GM12878 (cell line): ENCODE measurements at regions of chr3 and their contacts with region 1.

Region 1: DNA sequence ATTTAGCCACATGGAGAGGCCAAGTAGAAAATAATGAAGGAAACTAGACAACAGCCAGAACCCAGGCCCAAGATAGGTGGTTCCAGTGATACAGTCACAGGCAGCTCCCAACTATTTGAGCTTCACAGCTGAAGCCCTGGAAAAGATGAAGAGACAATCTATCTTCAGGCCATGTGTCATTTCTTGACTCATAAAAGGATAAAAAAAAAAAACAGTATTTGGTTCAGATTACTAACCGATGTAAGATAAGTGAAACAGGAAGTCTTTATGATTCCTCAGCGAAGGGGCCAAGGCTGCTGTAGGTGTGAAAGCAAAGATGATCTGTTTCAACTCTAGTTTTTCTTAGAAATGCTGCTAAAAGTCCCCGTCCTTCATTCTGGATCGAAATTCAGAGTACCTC is 394.6 kb downstream of the ZNF385D start:
- DNase-seq: no peak
- ATAC-seq: peak; percentile 74
- H3K4me3 ChIP-seq: no peak overlapping the region
- H3K27ac ChIP-seq: no peak overlapping the region
- H3K4me1 ChIP-seq: no peaks in the 10 kb centered on the region
- H3K27me3 ChIP-seq: no peaks in the 10 kb centered on the region
- CTCF ChIP-seq: no peak
- EP300 ChIP-seq: no peak
- POLR2A ChIP-seq: no peak
- RAD21 ChIP-seq: no peak

Region 2: DNA sequence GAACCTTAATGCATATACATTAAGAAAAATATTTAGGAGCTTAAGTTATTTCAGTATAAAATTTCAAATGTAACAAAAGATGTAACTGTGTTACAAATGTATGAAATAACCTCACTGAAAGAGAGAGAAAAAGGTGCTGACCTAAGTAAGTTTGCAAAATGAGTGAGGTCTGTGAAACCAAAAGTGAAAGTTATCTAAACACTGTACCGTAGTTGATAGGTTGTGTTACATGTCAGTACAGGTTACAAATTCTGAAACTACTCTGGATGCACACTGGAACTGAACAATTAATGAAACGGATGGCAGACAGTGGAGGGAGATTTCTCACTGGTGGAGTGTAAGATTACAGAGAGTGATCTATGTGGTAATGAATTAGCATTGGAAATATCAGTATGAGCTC is 26.1 kb before region 1 on chr3:
- CTCF ChIA-PET with region 1: no interaction called
- POLR2A ChIA-PET with region 1: interaction called, 4 read pairs
- RAD21 ChIA-PET with region 1: interaction called, 4 read pairs
- SMC1A ChIA-PET with region 1: interaction called, 11 read pairs
- in situ Hi-C with region 1: no loop called
- intact Hi-C with region 1: no loop called
- DNase-seq: peak; percentile 9
- ATAC-seq: peak; percentile 98
- H3K4me3 ChIP-seq: no peak overlapping the region
- H3K27ac ChIP-seq: no peak overlapping the region
- H3K4me1 ChIP-seq: no peaks in the 10 kb centered on the region
- H3K27me3 ChIP-seq: no peaks in the 10 kb centered on the region
- CTCF ChIP-seq: no peak
- EP300 ChIP-seq: no peak
- POLR2A ChIP-seq: no peak
- RAD21 ChIP-seq: no peak